ENCODE measurements at regions of chr16 and their contacts with region 1.

Region 1: DNA sequence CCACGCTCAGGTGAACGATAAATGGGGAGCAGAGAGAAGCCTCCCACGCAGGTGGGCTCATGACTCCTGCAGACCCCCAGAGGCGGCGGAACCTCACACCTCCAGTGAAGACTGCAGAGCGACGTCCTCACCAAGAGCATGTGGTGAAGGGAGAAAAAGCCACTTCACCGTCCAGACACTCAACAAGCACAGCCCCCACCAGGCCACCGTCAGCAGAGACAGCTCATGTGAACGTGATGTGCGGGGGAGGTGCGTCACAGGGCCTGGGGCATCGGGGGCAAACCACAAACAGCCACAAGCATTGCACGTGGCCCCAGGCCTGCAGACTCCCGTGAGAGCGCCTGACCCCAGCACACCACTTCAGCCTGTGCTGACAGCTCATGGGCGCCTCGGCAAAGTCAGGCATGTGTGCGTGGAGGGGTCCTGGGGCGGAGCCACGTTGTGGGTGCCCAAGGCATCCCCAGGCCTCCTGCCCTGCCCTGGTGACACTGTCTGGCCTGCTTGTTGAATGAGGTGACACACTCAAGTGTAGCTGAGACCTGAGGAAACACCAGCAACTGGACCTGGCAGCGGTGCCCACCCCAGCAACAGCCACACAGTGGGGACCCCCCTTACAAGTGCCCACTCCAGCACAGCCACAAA is 19.0 kb downstream of the LMF1 start:
- DNase-seq: no peak
- H3K4me3 ChIP-seq: no peak overlapping the region
- H3K4me3 Mint-ChIP-seq: no peak overlapping the region
- H3K27ac ChIP-seq: no peak overlapping the region
- H3K27ac Mint-ChIP-seq: peak overlapping the region in 1 of 7 donors; percentile 57
- H3K4me1 ChIP-seq: no peaks in the 10 kb centered on the region
- H3K4me1 Mint-ChIP-seq: peaks cover 0 to 22% (median 10%) of the 10 kb centered on the region in 4 donors
- H3K27me3 ChIP-seq: no peaks in the 10 kb centered on the region
- H3K27me3 Mint-ChIP-seq: no peaks in the 10 kb centered on the region

Region 2: GRCh38 chr16:886084-886543 is 65.7 kb before region 1 on chr16:
- CTCF ChIA-PET with region 1: no interaction called
- POLR2A ChIA-PET with region 1: no interaction called
- intact Hi-C with region 1: no loop called
- DNase-seq: no peak
- H3K4me3 ChIP-seq: no peak overlapping the region
- H3K4me3 Mint-ChIP-seq: no peak overlapping the region
- H3K27ac ChIP-seq: no peak overlapping the region
- H3K27ac Mint-ChIP-seq: no peak overlapping the region
- H3K4me1 ChIP-seq: no peaks in the 10 kb centered on the region
- H3K4me1 Mint-ChIP-seq: peaks cover 0 to 1% (median 0%) of the 10 kb centered on the region in 4 donors
- H3K27me3 ChIP-seq: no peaks in the 10 kb centered on the region
- H3K27me3 Mint-ChIP-seq: no peaks in the 10 kb centered on the region

Region 3: DNA sequence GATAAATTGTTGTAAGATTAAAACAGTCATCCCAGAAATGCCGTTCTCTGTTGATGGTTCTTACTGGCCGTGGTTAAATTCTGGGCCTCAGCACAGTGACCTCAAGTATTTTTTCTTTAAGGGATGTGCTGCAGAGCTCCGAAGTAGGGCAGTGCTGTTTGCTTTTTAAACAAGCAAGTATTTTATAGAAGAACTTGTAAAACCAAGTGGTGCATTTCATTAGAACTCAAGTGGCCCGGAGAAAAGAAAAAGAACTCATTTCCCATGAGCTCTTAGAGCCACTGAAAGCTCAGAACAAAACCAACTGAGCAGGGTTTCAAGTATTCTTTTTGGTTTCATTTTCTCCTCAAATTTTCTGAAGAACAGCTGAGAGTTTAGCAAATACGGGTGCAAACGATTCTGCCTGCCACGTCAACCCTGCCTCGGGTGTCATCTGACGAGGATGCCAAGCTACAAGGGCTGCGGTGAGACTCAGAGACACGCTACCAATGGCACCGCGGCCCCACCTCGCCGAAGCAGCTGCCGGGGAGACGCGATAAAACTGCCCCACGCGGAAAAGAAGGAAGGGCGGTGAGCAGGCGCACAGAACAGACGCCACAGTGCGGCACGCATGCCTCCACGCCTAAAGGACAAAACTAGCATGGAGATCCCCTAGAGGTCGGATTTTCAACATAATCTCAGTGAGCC is 12.7 kb after region 1 on chr16:
- CTCF ChIA-PET with region 1: no interaction called
- POLR2A ChIA-PET with region 1: interaction called, 11 read pairs
- intact Hi-C with region 1: no loop called
- DNase-seq: peak; percentile 74 to 92 (median 86)
- H3K4me3 ChIP-seq: peak overlapping the region; percentile 30 to 34
- H3K4me3 Mint-ChIP-seq: peak overlapping the region; percentile 69 to 88 (median 84)
- H3K27ac ChIP-seq: peak overlapping the region; percentile 70
- H3K27ac Mint-ChIP-seq: peak overlapping the region; percentile 79 to 98 (median 95)
- H3K4me1 ChIP-seq: peaks cover 37% of the 10 kb centered on the region
- H3K4me1 Mint-ChIP-seq: peaks cover 23 to 58% (median 44%) of the 10 kb centered on the region in 4 donors
- H3K27me3 ChIP-seq: no peaks in the 10 kb centered on the region
- H3K27me3 Mint-ChIP-seq: no peaks in the 10 kb centered on the region

Measured in CD4-positive, alpha-beta memory T cell (primary cell).